Mammary epithelial cell (primary cell): ENCODE measurements at regions of chr13 and their contacts with region 1.

Region 1: GRCh38 chr13:44810061-44810840 is 179.0 kb downstream of the NUFIP1 start:
- DNase-seq: no peak
- H3K4me3 ChIP-seq: no peak overlapping the region
- H3K27ac ChIP-seq: no peak overlapping the region
- H3K4me1 ChIP-seq: peaks cover 7% of the 10 kb centered on the region
- H3K27me3 ChIP-seq: no peaks in the 10 kb centered on the region
- CTCF ChIP-seq: no peak

Region 2: GRCh38 chr13:44768239-44768638 is 42.0 kb before region 1 on chr13:
- CTCF ChIA-PET with region 1: no interaction called
- dilution Hi-C with region 1: no loop called
- in situ Hi-C with region 1: no loop called
- intact Hi-C with region 1: no loop called
- DNase-seq: no peak
- H3K4me3 ChIP-seq: no peak overlapping the region
- H3K27ac ChIP-seq: no peak overlapping the region
- H3K4me1 ChIP-seq: peaks cover 21% of the 10 kb centered on the region
- H3K27me3 ChIP-seq: no peaks in the 10 kb centered on the region
- CTCF ChIP-seq: no peak

Region 3: GRCh38 chr13:44854313-44855060 is 44.2 kb after region 1 on chr13:
- CTCF ChIA-PET with region 1: no interaction called
- dilution Hi-C with region 1: loop called (anchors 5 kb)
- in situ Hi-C with region 1: no loop called
- intact Hi-C with region 1: no loop called
- DNase-seq: no peak
- H3K4me3 ChIP-seq: no peak overlapping the region
- H3K27ac ChIP-seq: no peak overlapping the region
- H3K4me1 ChIP-seq: no peaks in the 10 kb centered on the region
- H3K27me3 ChIP-seq: no peaks in the 10 kb centered on the region
- CTCF ChIP-seq: no peak